ENCODE measurements at regions of chr2 and their contacts with region 1.

Region 1: GRCh38 chr2:240143801-240144648 is 3.6 kb upstream of the OTOS start:
- DNase-seq: peak; percentile 87
- ATAC-seq: peak; percentile 89

Region 2: GRCh38 chr2:240060977-240061591 is 82.9 kb before region 1 on chr2:
- intact Hi-C with region 1: loop called (anchors 5 kb)
- DNase-seq: no peak
- ATAC-seq: peak; percentile 77

Region 3: DNA sequence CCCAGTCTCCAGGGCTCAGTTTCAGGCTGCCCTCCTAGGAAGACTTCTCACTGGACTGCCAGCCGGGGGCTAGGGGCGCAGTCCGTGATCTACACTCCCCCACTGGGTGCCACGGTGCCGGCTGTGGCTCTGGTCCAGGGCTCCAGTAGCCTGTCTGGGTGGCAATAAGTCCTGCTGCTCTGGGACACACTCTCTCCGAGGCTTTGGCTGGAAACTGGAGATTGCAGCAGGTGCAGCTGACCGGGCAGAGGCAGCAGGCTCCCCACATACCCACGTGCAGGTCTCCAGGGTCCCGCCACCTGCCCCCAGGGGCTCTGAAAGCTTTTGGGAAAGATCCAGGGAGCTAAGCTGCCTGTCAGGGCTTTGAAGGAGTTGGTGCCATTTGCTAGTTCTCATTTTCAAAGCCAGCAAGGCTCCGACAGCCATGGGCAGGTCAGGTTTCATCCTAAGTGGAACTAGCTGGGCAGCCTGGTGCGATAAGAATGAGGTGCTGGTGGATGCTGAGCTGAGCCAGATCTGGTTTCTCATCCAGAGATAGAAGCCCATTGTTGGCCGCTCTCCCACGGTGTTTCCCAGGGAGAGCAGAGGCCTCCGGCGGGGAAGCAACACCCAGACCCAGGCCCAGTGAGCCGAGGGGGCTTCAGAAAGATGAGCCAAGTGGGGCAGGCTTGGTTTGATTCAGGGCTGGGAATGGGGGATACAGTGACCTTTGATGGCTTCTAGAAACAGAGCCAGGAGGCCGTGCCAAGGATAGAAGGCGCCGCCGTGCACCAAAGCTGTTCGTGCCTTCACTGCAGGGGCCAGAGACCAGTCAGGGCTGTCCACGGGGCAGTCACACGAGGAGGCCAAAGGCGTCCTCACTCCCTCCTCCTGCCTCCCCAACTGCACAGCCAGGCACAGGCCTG is 149.8 kb after region 1 on chr2:
- intact Hi-C with region 1: no loop called
- DNase-seq: no peak
- ATAC-seq: no peak